Heart right ventricle (tissue), 16 donors: ENCODE measurements at regions of chr11 and their contacts with region 1.

Region 1: GRCh38 chr11:62805076-62805892 is at the start of gene NXF1:
- DNase-seq: peak; percentile 94 to 96
- ATAC-seq: peak; percentile 92 to 97 (median 96)
- H3K4me3 ChIP-seq: peak within 1 kb of the TSS; percentile 36 to 88 (median 82)
- H3K27ac ChIP-seq: peak within 1 kb of the TSS; percentile 61 to 95 (median 90)
- H3K4me1 ChIP-seq: peaks cover 14 to 47% (median 31%) of the 10 kb centered on the region in 9 donors
- H3K27me3 ChIP-seq: no peaks in the 10 kb centered on the region
- CTCF ChIP-seq: peak in 2 of 9 donors; percentile 12 to 25
- total RNA-seq, gene NXF1: 28.3 to 58.7 (median 36.7) TPM

Region 2: DNA sequence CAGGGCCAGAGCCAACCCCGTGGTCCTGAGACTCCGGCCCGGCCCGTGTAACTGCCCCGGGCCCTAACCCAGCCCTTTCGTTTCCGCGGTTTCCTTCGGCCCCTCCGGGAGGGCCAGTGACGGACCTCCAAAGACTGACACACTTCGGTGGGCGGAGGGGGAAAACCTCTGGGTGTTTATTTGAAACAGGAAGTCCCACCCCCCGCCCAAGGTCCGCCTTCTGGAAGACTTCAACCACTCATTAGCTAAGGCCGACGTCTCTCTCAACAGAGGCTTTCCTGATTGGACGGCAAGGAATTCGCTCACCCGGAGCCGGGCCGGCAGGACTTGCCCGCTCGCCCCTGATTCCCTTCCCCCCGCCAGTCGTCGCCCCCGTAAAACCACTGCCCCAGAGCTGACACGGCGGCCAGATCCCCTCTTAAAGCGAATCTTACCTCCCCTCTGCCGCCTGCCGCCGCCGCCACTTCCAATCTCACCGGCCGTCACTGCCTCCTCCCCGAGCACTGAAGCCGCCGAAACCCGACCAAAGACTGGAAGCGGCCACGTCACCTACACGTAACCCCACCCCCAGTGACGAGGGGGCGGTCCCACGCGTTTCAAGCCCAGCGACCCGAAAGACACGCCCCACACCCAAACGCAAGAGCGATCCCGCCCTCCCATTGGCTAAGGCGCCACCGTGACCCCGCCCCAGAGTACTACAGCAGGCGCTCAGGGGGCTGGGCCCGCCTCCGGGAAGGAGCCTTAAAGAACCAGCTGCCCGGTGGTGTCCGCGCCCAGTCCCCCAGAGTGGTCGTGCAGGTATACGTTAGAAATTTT is 26.4 kb after region 1 on chr11 and contains the start of gene STX5:
- intact Hi-C with region 1: loop called in 1 of 10 experiments (anchors 2 kb)
- DNase-seq: peak; percentile 99 to 100
- ATAC-seq: peak; percentile 98 to 99 (median 98)
- H3K4me3 ChIP-seq: peak within 1 kb of the TSS; percentile 65 to 99 (median 88)
- H3K27ac ChIP-seq: peak within 1 kb of the TSS; percentile 82 to 97 (median 94)
- H3K4me1 ChIP-seq: peaks cover 8 to 49% (median 44%) of the 10 kb centered on the region in 9 donors
- H3K27me3 ChIP-seq: no peaks in the 10 kb centered on the region
- CTCF ChIP-seq: no peak
- total RNA-seq, gene STX5: 16.8 to 27.0 (median 19.0) TPM